ENCODE measurements at regions of chr16 and their contacts with region 1.

Region 1: GRCh38 chr16:17416461-17417311 is 54.1 kb downstream of the XYLT1 start:
- DNase-seq: peak; percentile 57
- ATAC-seq: peak; percentile 86
- H3K4me3 Mint-ChIP-seq: peak overlapping the region; percentile 77
- H3K27ac Mint-ChIP-seq: peak overlapping the region; percentile 95
- H3K4me1 Mint-ChIP-seq: peaks cover 68% of the 10 kb centered on the region
- H3K27me3 Mint-ChIP-seq: no peaks in the 10 kb centered on the region
- CTCF ChIP-seq: no peak

Region 2: DNA sequence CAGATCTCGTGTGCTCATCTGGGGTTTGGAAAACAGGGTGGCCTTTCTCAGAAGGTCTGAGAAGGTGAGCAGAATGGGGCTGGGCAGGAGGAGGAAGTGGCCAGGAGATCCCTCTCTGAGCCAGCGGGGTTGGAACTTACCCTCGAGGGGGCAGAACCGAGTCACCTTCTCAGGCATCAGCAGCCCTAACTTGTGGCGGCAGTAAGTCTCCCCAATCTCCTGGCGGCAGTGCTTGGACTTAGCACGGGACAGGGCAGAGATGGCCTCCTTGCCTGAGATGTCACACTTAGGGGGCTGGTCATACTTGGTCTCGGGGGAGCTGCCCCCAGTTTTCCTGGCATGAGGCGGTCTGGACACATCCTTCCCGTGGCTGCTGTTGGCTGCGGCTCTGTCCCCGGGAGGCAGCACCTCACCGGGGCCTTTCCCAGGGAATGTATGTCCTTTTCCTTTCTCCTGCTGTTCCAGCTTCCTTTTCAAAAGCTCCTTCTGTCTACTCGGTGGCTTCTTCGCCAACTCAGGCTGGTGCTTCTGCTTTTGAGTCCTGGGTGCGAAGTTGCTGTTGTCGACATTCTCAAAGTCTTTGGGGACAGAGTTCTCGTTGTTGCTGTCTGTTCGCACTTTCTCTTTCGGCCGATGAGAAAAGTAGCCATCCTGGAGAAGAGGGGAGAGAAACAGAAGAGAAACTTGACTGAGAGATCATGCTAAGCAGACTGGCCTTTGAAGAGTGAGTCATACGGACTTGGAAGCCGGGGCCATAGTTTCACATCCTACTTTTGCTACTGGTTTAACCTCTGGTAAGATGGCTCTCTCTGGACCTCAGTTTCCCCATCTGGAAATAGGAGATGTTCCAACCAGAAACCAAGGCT is 157.6 kb before region 1 on chr16:
- CTCF ChIA-PET with region 1: interaction called, 3 read pairs
- POLR2A ChIA-PET with region 1: no interaction called
- intact Hi-C with region 1: loop called (anchors 1 kb)
- DNase-seq: no peak
- ATAC-seq: peak; percentile 83
- H3K4me3 Mint-ChIP-seq: peak overlapping the region; percentile 79
- H3K27ac Mint-ChIP-seq: peak overlapping the region; percentile 91
- H3K4me1 Mint-ChIP-seq: peaks cover 38% of the 10 kb centered on the region
- H3K27me3 Mint-ChIP-seq: no peaks in the 10 kb centered on the region
- CTCF ChIP-seq: no peak

Region 3: DNA sequence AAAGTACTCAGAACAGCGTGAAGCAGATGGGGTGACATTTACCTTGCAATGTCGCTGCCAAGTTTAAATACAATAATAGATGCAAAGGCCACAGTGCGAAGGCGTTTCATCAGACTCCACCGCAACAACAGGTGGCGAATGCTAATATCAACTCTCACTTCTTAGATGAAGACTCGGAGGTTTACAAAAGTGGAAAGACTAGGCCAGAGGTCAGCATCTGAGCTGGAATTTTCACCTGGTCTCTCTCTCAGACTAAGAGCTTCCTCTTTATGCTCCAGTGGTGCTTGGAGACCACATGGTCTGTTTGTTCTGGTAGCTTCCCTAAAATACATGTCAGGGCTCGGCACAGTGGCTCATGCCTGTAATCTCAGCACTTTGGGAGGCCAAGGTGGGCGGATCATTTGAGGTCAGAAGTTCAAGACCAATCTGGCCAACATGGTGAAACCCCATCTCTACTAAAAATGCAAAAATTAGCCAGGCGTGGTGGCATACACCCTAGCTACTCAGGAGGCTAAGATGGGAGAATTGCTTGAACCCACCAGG is 115.0 kb before region 1 on chr16:
- CTCF ChIA-PET with region 1: interaction called, 9 read pairs
- POLR2A ChIA-PET with region 1: interaction called, 24 read pairs
- intact Hi-C with region 1: loop called (anchors 1 kb)
- DNase-seq: peak; percentile 62
- ATAC-seq: peak; percentile 86
- H3K4me3 Mint-ChIP-seq: peak overlapping the region; percentile 58
- H3K27ac Mint-ChIP-seq: peak overlapping the region; percentile 85
- H3K4me1 Mint-ChIP-seq: peaks cover 71% of the 10 kb centered on the region
- H3K27me3 Mint-ChIP-seq: no peaks in the 10 kb centered on the region
- CTCF ChIP-seq: no peak

Region 4: DNA sequence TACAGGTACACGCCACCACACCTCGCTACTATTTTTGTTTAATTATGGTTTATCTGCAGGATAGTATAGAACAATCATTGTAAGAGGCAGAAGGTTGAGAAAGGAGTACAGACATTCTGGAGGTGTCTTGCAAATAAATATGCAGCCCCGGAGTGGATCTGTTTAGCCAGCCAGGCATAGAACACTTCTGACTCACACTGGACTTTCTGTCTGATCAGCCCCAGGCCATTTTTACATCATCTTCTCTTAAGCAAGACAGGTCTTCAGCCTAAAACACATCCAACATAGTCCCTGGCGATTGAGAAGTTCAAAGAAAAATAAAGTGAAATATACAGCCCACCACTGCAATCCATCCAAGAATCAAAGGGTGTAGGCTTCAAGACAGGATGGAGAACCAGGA is 27.3 kb before region 1 on chr16:
- CTCF ChIA-PET with region 1: no interaction called
- POLR2A ChIA-PET with region 1: no interaction called
- intact Hi-C with region 1: no loop called
- DNase-seq: no peak
- ATAC-seq: no peak
- H3K4me3 Mint-ChIP-seq: no peak overlapping the region
- H3K27ac Mint-ChIP-seq: no peak overlapping the region
- H3K4me1 Mint-ChIP-seq: peaks cover 31% of the 10 kb centered on the region
- H3K27me3 Mint-ChIP-seq: no peaks in the 10 kb centered on the region
- CTCF ChIP-seq: no peak

Region 5: DNA sequence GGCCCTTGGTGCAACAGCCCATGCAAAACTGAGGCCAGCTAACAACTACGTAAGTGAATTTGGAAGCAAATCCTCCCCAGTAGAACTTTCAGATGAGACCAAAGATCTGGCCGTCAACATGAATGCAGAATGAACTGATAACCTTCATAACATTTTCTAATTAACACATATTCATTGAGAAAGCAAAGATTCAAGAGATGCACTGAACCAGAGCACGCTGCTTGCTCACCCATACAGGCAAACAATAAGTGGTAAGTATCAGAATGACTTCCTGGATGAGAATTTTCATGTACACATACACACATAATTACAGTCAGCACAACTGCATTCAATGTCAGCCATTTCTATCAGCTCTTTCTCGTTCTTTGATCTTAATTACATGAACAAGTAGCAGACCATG is 23.4 kb after region 1 on chr16:
- CTCF ChIA-PET with region 1: no interaction called
- POLR2A ChIA-PET with region 1: interaction called, 3 read pairs
- intact Hi-C with region 1: loop called (anchors 2 kb)
- DNase-seq: no peak
- ATAC-seq: peak; percentile 45
- H3K4me3 Mint-ChIP-seq: no peak overlapping the region
- H3K27ac Mint-ChIP-seq: peak overlapping the region; percentile 10
- H3K4me1 Mint-ChIP-seq: peaks cover 38% of the 10 kb centered on the region
- H3K27me3 Mint-ChIP-seq: no peaks in the 10 kb centered on the region
- CTCF ChIP-seq: no peak

Region 6: GRCh38 chr16:17467923-17468540 is 51.3 kb after region 1 on chr16:
- CTCF ChIA-PET with region 1: interaction called, 15 read pairs
- POLR2A ChIA-PET with region 1: interaction called, 23 read pairs
- intact Hi-C with region 1: loop called (anchors 1 kb)
- DNase-seq: no peak
- ATAC-seq: no peak
- H3K4me3 Mint-ChIP-seq: peak overlapping the region; percentile 83
- H3K27ac Mint-ChIP-seq: no peak overlapping the region
- H3K4me1 Mint-ChIP-seq: peaks cover 54% of the 10 kb centered on the region
- H3K27me3 Mint-ChIP-seq: no peaks in the 10 kb centered on the region
- CTCF ChIP-seq: no peak

Region 7: DNA sequence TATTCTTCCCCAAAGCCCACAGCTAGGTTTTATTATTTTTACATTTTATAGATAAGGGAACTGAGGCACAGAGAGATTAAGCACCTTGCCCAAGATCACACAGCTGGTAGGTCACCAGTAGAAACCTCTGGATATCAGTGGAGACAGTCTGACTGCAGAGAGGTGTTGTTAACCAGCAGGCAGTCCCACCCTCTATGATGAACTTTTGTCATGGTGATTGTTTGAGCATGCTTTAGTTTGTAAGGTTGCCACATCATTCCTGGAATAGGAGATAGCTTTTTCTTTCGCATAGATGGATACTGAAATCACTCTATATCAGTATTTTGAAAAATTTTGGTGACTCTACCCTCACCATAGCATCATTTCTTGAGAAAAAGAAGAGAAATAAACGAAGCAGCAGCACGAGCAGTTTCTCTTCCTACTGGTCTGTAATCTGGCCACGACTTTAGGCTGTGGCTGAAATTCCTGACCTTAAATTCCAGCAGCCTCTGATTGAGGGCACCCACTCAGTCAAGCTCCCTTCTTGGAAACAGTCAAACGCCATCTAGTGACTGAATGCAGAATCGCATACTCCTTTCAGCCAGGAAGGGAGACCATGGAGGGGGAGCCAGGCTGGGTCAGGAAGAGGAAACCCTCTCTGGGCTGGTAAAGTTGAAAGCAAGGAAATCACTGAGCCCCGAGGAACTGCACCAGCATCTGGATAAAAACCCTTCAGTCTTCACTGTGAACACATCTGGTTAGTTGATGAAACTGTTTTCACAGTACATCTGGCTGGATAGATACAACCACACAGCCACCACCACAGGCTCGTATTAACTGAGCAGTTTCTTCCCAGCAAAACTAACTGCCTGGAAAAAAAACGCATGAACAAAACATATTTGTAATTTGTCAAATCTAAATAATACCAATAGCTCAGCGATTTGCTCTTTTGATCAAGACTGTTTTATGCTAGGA is 162.5 kb after region 1 on chr16:
- CTCF ChIA-PET with region 1: interaction called, 12 read pairs
- POLR2A ChIA-PET with region 1: no interaction called
- intact Hi-C with region 1: loop called (anchors 1 kb)
- DNase-seq: no peak
- ATAC-seq: peak; percentile 70
- H3K4me3 Mint-ChIP-seq: no peak overlapping the region
- H3K27ac Mint-ChIP-seq: no peak overlapping the region
- H3K4me1 Mint-ChIP-seq: no peaks in the 10 kb centered on the region
- H3K27me3 Mint-ChIP-seq: peaks cover 6% of the 10 kb centered on the region
- CTCF ChIP-seq: peak; percentile 83

Measured in activated B cell treated with CpG ODN at 0.5 μM for 24 hours (primary cell).